WTC11 (cell line): ENCODE measurements at regions of chr9 and their contacts with region 1.

Region 1: DNA sequence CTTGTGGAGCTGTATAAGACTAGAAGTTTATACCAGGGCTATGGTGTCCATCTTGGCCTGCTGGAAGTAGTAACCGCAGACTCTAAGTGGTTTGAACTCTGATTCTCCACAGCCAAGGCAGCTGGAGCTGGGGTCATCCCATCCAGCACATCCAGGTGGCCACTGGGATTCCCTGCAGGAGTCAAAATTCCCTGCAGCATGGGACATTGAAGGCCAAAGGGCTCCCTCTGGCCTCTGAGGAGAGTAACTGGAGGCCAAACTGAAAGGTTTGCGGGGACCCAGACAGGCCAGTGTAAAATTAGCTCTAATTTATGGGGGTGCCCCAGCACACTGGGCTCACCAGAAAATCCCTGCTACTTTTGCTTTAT is 12.2 kb upstream of the PRXL2C start:
- DNase-seq: no peak
- ATAC-seq: no peak
- H3K4me3 Mint-ChIP-seq: no peak overlapping the region
- H3K27ac Mint-ChIP-seq: no peak overlapping the region
- H3K4me1 Mint-ChIP-seq: no peaks in the 10 kb centered on the region
- H3K27me3 Mint-ChIP-seq: peaks cover 2% of the 10 kb centered on the region; the same call in 1 of the 2 replicates
- CTCF ChIP-seq: no peak

Region 2: GRCh38 chr9:96327694-96328352 is 339.5 kb before region 1 on chr9:
- CTCF ChIA-PET with region 1: interaction called, 12 read pairs
- POLR2A ChIA-PET with region 1: no interaction called
- DNase-seq: no peak
- ATAC-seq: peak; percentile 53; the same call in 1 of the 2 replicates
- H3K4me3 Mint-ChIP-seq: no peak overlapping the region
- H3K27ac Mint-ChIP-seq: no peak overlapping the region
- H3K4me1 Mint-ChIP-seq: peaks cover 13% of the 10 kb centered on the region
- H3K27me3 Mint-ChIP-seq: no peaks in the 10 kb centered on the region
- CTCF ChIP-seq: peak; percentile 70

Region 3: GRCh38 chr9:96441798-96442445 is 225.4 kb before region 1 on chr9:
- CTCF ChIA-PET with region 1: interaction called, 25 read pairs
- POLR2A ChIA-PET with region 1: no interaction called
- DNase-seq: no peak
- ATAC-seq: peak; percentile 60
- H3K4me3 Mint-ChIP-seq: no peak overlapping the region
- H3K27ac Mint-ChIP-seq: no peak overlapping the region
- H3K4me1 Mint-ChIP-seq: no peaks in the 10 kb centered on the region
- H3K27me3 Mint-ChIP-seq: no peaks in the 10 kb centered on the region; the same call in 1 of the 2 replicates
- CTCF ChIP-seq: peak; percentile 51

Region 4: GRCh38 chr9:96449845-96450612 is 217.3 kb before region 1 on chr9 and contains the start of gene HABP4:
- CTCF ChIA-PET with region 1: interaction called, 24 read pairs
- POLR2A ChIA-PET with region 1: no interaction called
- DNase-seq: peak; percentile 94
- ATAC-seq: peak; percentile 93
- H3K4me3 Mint-ChIP-seq: peak within 1 kb of the TSS; percentile 85
- H3K27ac Mint-ChIP-seq: no peak within 1 kb of the TSS
- H3K4me1 Mint-ChIP-seq: peaks cover 15% of the 10 kb centered on the region
- H3K27me3 Mint-ChIP-seq: peaks cover 39% of the 10 kb centered on the region
- CTCF ChIP-seq: no peak
- total RNA-seq, gene HABP4: 9.8 to 11.0 TPM (median 10.1 TPM) in 3 replicates

Region 5: GRCh38 chr9:96636368-96636767 is 31.0 kb before region 1 on chr9:
- CTCF ChIA-PET with region 1: no interaction called
- POLR2A ChIA-PET with region 1: no interaction called
- DNase-seq: no peak
- ATAC-seq: no peak
- H3K4me3 Mint-ChIP-seq: no peak overlapping the region
- H3K27ac Mint-ChIP-seq: no peak overlapping the region
- H3K4me1 Mint-ChIP-seq: peaks cover 3% of the 10 kb centered on the region; the same call in 1 of the 2 replicates
- H3K27me3 Mint-ChIP-seq: no peaks in the 10 kb centered on the region
- CTCF ChIP-seq: no peak